Left cardiac atrium (tissue), 4 donors: ENCODE measurements at regions of chr11 and their contacts with region 1.

Region 1: DNA sequence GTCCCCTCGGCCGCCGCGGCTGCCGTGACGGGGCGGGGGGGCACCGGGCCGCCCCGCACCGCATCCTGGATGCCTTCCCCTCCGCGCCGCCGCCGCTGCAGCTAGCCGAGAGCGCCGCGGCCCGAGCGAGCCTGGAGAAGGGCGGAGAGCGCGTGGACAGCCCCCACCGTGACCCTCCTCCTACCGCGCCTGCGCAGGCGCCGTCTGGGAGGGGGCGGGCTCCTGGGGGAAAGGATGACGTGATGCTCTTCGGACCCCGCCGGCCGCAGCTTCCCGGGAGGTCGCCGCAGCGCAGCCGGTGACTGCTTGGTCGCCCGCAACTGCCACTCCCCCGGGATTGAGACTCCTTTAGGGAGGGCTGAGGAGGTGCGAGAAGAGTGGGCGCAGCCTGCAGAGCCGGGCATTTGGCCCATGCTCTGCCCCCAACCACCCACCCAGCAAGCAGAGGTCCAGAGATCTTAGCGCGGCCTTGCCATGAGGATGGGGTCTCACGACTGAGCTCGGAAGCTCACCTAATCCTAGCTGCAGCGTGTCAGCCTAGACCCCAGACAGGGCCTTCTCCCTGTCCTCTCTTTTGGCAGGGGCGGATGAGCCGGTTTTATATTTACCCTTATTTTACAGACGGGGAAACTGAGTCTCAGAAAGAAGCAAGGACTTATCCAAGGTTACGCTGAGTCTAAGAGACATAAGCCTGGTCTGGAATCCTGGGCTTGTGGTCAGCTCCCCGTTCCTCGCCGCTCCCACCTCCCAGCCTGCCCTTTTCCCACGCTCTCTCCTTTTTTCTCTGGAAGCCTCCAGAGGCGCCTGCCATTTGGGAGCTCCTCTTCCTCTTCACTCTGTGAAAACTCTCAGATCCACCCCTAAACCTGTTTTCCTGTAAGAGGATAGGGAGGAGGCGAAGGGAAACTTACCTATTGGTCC is at the start of gene DENND5A:
- DNase-seq: peak; percentile 88
- ATAC-seq: peak; percentile 95
- total RNA-seq, gene DENND5A: 71.5 to 90.0 TPM

Region 2: DNA sequence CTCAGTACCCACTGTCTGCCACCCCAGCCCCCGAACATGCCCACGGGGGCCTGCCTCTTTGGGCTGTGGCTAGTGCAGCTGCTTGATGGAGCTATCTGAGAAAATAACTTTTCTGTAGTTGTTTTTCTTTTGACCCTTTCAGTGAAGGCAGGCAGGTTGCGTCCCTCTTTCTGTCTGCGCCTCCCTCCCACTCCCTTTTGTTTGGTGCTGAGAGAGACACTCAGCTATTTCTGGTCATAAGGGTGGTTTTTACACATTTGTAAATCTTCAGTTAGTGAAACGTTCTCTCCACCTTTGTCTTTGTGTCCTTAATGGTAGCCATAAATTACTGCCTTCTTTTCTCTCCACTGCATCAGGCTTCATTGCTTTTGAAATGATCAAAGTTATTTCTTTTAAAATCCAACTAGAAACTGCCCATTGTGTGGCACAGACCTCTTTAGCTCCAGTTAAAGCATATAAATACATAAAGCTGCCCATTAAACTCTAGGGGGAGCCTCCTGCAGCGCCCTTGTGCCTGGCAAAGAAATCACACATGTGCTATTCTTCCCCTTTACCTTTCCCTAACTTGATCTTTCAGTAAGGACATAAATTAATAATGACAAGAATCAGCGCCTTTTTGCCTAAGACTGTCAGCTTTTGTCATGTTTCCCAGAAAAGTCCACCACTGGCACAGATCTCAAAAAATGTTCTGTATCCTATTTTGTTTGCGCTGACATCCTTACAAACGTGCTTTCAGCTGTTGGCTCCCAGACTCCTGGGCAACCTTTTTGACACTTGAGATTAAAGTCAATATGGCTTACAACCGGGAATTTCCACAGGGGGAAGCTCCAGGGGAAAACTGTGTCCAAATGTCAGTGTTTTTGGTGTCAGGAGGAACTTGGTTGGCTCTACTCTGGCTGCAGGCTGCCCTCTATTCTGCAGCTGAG is 172.4 kb before region 1 on chr11:
- intact Hi-C with region 1: no loop called
- DNase-seq: no peak
- ATAC-seq: no peak

Region 3: DNA sequence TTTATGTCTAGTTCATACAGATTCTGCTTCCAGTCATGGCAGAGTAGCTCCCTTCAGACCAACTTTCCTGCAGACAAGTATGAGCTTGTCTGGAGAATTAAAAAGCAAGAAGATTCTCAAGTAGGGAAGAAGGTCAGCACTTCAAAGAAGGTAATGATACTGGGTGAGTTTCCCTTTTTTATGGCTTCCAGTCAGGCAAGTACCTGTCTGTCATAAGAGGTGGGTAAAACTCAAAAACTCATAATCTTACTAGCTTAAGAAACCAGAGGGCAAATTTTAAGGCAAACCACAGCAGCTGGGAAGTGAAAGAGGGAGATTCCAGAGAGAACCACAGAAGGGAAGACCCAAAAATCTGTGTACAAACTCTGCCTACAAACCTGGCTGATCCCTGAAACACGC is 54.5 kb before region 1 on chr11:
- intact Hi-C with region 1: loop called in 1 of 2 experiments (anchors 5 kb)
- DNase-seq: no peak
- ATAC-seq: no peak

Region 4: DNA sequence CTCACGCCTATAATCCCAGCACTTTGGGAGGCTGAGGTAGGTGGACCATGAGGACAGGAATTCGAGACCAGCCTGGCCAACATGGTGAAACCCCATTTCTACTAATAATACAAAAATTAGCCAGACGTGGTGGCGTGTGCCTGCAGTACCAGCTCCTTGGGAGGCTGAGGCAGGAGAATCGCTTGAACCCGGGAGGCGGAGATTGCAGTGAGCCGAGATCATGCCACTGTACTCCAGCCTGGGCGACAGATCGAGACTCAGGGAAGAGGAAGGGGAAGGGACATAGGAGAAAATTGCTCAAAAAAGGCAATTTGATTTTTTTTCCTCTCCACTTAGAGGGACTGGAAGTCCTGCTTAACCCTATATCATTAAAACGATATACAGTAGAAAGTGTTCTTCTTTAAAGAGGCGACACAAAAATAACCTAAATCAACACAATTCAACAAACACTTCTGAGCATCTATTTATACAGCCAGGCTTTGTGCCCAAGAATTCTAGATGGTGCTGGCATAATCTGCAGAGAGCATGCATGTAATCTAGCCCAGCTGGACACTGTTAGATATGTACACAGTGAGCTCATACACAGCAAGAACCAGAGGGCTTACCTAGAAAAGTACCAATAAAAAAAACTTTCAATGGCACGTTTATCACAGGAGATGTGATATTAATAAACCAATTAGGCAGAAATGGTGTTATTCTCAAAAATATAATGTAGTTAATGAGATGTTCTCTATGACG is 20.5 kb after region 1 on chr11:
- intact Hi-C with region 1: no loop called
- DNase-seq: no peak
- ATAC-seq: peak; percentile 87 to 94

Region 5: DNA sequence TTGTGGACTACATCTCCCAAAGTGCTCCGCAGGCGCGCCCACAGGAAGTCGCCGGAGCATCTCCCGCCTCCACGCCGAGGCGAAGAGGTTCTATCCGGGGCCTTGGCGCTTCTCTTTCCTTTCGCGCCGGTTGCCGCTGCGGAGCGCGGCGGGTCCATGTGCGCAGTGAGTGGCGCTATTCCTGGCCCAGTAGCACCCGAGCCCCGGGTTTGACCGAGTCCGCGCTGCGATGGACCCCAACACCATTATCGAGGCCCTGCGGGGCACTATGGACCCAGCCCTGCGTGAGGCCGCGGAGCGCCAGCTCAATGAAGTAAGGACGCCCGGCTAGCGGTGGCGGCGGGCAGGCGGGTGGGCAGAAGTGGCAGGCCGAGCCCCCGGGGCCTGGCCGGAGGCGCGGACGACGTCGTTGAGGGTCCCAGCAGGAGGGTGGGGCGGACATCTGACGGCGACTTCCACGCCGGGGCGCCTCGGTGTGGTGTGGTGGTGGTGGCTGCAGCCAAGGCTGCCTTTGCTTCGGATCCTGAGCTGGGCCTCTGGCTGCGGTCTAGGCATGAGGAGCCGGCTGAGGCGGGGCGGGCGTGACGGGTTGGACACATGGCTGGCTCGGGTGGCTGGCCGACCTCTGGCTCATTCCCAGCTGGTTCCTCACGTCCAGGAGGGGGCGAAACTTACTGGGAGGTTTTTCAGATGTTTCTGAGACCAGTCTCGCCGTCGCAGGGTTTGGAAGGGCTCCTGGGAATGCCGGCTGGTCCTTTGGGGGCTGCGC is 119.2 kb after region 1 on chr11 and contains the start of gene IPO7:
- intact Hi-C with region 1: loop called in 1 of 2 experiments (anchors 10 kb)
- DNase-seq: peak; percentile 95
- ATAC-seq: peak; percentile 97 to 98
- total RNA-seq, gene IPO7: 92.1 to 117 TPM

Region 6: GRCh38 chr11:9428706-9429105 is 163.2 kb after region 1 on chr11:
- intact Hi-C with region 1: no loop called
- DNase-seq: no peak
- ATAC-seq: no peak